Aorta (tissue), 5 donors: ENCODE measurements at regions of chr10 and their contacts with region 1.

Region 1: GRCh38 chr10:68700197-68700596 is 20.8 kb upstream of the CCAR1 start:
- DNase-seq: no peak
- ATAC-seq: no peak
- H3K4me3 ChIP-seq: no peak overlapping the region
- H3K27ac ChIP-seq: no peak overlapping the region
- H3K4me1 ChIP-seq: no peaks in the 10 kb centered on the region
- H3K27me3 ChIP-seq: no peaks in the 10 kb centered on the region

Region 2: GRCh38 chr10:68550747-68551411 is 149.3 kb before region 1 on chr10:
- intact Hi-C with region 1: loop called in 1 of 2 experiments (anchors 10 kb)
- DNase-seq: no peak
- ATAC-seq: peak; percentile 82
- H3K4me3 ChIP-seq: no peak overlapping the region
- H3K27ac ChIP-seq: no peak overlapping the region
- H3K4me1 ChIP-seq: no peaks in the 10 kb centered on the region
- H3K27me3 ChIP-seq: no peaks in the 10 kb centered on the region